Activated B cell treated with CpG ODN at 0.5 μM for 24 hours (primary cell): ENCODE measurements at regions of chr1 and their contacts with region 1.

Region 1: DNA sequence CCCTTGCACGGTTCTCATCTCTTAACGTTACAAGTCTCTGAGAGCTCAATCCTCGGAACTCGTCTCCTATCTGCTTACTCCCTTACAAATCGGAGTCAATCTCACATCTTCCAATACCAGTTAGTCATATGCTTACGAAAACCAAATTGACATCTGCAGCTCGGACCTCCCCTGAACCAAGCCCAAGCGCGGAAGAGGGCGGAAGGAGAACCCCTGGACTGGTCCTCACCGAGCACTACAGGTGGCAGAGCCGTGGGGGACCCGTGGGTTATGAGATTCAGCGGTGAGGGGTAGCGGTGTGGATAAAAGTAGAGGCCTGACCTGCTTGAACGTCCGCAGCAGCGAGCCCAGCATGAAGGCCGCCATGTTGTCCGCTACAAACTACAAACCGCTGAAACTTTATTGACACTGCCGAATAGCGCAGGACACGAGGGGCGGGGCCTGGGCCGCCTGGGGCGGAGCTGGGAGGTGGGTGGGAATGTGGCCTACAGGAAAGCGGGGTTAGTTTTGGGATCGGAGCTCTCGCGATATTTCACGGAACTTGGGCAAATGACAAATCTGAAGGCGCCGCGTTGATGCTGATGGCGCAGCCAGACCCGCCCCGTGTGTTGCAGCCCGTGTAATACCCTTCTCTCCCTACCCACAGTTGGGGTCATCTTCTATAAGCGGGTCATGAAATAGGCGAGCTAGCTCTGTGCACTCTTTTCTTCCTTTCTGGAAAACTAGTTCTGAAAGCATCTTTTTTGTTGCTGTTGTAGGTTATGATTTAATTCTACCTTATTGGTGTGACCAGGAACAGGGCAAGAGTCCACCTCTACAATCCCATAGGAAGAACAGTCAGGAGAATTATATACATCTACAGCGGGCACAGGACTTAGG is at the start of gene MRPS14:
- DNase-seq: peak; percentile 91
- ATAC-seq: peak; percentile 93
- H3K4me3 Mint-ChIP-seq: peak within 1 kb of the TSS; percentile 95
- H3K27ac Mint-ChIP-seq: peak within 1 kb of the TSS; percentile 90
- H3K4me1 Mint-ChIP-seq: peaks cover 29% of the 10 kb centered on the region
- H3K27me3 Mint-ChIP-seq: no peaks in the 10 kb centered on the region
- CTCF ChIP-seq: no peak
- total RNA-seq, gene MRPS14: 36.5 and 36.9 TPM in 2 replicates

Region 2: GRCh38 chr1:173714759-173715537 is 1308.3 kb before region 1 on chr1 and contains the start of gene KLHL20:
- CTCF ChIA-PET with region 1: no interaction called
- POLR2A ChIA-PET with region 1: interaction called, 3 read pairs
- intact Hi-C with region 1: loop called (anchors 5 kb)
- DNase-seq: peak; percentile 71
- ATAC-seq: peak; percentile 96
- H3K4me3 Mint-ChIP-seq: peak within 1 kb of the TSS; percentile 93
- H3K27ac Mint-ChIP-seq: peak within 1 kb of the TSS; percentile 89
- H3K4me1 Mint-ChIP-seq: peaks cover 22% of the 10 kb centered on the region
- H3K27me3 Mint-ChIP-seq: peaks cover 14% of the 10 kb centered on the region
- CTCF ChIP-seq: no peak
- total RNA-seq, gene KLHL20: 19.6 and 26.1 TPM in 2 replicates

Region 3: DNA sequence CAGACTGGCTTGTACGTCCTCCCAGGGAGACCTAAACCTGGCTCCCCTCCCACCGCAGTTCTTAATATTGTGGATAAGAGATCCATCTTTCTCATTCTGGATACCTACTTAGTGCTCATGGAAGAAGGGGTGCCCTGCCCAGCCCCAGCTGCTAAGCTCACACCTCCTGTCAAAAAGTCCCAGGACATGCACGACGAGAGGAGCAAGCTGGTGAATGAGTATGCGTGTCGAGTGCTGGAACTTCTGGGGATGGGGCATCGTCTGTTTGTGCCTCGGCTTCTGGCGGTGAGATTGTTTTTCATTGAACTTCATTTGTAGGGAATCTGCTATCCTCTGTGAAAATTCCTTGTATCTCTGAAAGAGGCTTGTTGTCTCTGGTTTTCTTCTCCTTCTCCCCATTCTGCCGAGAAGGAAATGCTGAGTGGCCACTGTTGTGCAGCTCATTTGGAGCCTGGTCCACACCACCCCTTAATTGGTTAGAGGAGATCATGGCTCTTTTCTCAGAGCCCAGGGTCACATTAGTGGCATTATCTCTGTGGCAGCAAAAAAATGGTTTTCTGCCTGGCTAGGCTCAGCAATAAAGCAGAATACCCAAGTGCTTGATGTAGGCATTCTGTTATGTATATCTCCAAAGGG is 222.9 kb before region 1 on chr1:
- CTCF ChIA-PET with region 1: no interaction called
- POLR2A ChIA-PET with region 1: interaction called, 11 read pairs
- intact Hi-C with region 1: loop called (anchors 1 kb)
- DNase-seq: no peak
- ATAC-seq: no peak
- H3K4me3 Mint-ChIP-seq: no peak overlapping the region
- H3K27ac Mint-ChIP-seq: no peak overlapping the region
- H3K4me1 Mint-ChIP-seq: peaks cover 11% of the 10 kb centered on the region
- H3K27me3 Mint-ChIP-seq: no peaks in the 10 kb centered on the region
- CTCF ChIP-seq: no peak

Region 4: DNA sequence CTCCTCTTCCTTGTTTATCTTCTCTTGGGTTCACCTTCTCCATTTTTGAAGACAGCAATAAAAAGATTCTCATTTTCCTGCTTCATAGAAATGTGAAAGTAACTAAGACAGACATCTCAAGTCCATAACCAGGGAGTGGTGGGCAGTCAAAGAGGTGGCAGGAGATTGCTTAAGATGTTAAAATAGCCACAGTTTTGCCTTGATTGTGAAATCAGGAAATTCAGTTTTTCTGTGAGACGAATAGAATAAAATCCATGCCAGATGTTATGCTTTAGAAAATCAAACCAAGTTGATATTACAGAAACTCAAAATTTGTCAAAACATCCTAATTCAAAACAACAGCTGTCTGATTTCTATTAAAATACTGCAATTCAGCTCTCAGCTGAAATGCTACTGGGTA is 101.6 kb after region 1 on chr1:
- CTCF ChIA-PET with region 1: interaction called, 10 read pairs
- POLR2A ChIA-PET with region 1: no interaction called
- intact Hi-C with region 1: no loop called
- DNase-seq: no peak
- ATAC-seq: no peak
- H3K4me3 Mint-ChIP-seq: no peak overlapping the region
- H3K27ac Mint-ChIP-seq: no peak overlapping the region
- H3K4me1 Mint-ChIP-seq: no peaks in the 10 kb centered on the region
- H3K27me3 Mint-ChIP-seq: peaks cover 3% of the 10 kb centered on the region
- CTCF ChIP-seq: no peak

Region 5: DNA sequence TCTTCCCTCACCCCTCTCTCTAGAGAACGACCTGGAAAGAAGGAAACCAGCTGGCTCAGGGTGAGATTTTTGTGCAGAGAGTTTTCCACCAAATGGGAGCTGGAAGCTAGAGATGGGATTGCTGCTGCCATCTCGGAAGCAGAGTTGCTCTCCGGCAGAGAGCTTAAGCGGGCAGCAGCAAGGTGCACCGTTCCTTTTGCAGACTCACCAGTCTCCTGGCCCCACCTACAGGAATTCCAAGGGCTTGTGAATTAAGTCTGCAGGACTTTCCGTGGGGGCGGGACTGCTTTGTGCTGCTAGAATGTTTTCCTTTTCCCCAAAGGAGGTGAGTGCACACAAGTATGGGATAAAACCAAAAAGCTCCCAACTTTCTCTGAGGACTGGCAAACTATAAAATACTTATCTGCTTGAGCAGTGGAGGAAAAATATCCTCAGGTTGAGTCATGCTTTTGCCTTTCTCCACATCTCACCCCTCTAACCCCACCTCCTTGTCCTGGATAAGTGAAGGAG is 198.4 kb after region 1 on chr1:
- CTCF ChIA-PET with region 1: no interaction called
- POLR2A ChIA-PET with region 1: no interaction called
- intact Hi-C with region 1: loop called (anchors 10 kb)
- DNase-seq: no peak
- ATAC-seq: no peak
- H3K4me3 Mint-ChIP-seq: no peak overlapping the region
- H3K27ac Mint-ChIP-seq: no peak overlapping the region
- H3K4me1 Mint-ChIP-seq: peaks cover 78% of the 10 kb centered on the region
- H3K27me3 Mint-ChIP-seq: no peaks in the 10 kb centered on the region
- CTCF ChIP-seq: no peak

Region 6: GRCh38 chr1:175353066-175353465 is 329.8 kb after region 1 on chr1:
- CTCF ChIA-PET with region 1: no interaction called
- POLR2A ChIA-PET with region 1: no interaction called
- intact Hi-C with region 1: no loop called
- DNase-seq: no peak
- ATAC-seq: no peak
- H3K4me3 Mint-ChIP-seq: no peak overlapping the region
- H3K27ac Mint-ChIP-seq: no peak overlapping the region
- H3K4me1 Mint-ChIP-seq: no peaks in the 10 kb centered on the region
- H3K27me3 Mint-ChIP-seq: no peaks in the 10 kb centered on the region
- CTCF ChIP-seq: no peak

Region 7: DNA sequence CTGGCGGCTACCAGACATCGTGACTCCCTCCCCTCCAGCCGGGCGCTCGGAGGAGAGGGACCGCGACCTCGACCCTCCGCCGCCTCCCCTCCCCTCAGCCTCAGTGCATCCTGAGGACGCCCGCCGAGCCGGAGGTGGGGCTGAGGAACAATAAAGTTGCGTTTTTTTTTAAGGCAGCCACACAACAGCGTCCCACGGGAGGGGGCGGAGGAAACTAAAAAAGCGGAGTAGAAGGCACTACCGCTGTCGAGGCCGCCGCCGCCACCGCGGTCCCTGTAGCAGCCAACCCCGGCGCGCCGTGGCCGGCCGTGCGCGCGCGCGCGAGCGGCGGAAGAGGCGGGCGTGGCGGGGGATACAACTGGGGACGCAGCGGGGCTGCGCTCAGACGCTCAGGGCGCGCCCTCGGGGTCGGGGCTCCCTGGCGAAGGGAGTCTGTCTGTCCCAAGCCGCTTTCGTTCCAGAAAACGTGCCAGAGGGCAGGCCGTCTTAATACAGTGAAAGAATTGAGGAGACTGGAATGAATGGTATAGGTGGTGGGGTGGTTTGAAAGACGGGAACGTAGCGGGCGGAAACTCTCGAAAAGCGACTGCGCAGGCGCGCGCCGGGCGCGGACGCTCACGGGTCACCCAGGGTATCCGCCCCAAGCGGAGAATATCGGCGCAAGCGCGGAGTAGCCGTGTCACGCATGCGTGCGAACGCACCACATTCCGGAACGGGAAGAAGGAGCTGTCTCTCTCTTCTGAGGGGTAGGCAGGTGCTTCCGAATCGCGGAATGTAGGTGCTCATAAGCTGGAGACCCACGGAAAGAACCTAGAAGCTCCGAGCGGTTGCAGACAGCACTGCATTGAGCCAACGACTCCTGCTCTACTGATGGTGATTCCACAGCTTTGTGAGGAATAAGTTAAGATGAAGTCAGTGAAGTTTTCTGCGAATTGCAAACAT is 1184.0 kb after region 1 on chr1 and contains the start of gene COP1:
- CTCF ChIA-PET with region 1: no interaction called
- POLR2A ChIA-PET with region 1: interaction called, 3 read pairs
- intact Hi-C with region 1: loop called (anchors 1 kb)
- DNase-seq: peak; percentile 92
- ATAC-seq: peak; percentile 82
- H3K4me3 Mint-ChIP-seq: peak within 1 kb of the TSS; percentile 95
- H3K27ac Mint-ChIP-seq: peak within 1 kb of the TSS; percentile 97
- H3K4me1 Mint-ChIP-seq: peaks cover 50% of the 10 kb centered on the region
- H3K27me3 Mint-ChIP-seq: peaks cover 2% of the 10 kb centered on the region
- CTCF ChIP-seq: no peak
- total RNA-seq, gene COP1: 46.3 and 52.1 TPM in 2 replicates